K562 (cell line): ENCODE measurements at regions of chrX and their contacts with region 1.

Region 1: DNA sequence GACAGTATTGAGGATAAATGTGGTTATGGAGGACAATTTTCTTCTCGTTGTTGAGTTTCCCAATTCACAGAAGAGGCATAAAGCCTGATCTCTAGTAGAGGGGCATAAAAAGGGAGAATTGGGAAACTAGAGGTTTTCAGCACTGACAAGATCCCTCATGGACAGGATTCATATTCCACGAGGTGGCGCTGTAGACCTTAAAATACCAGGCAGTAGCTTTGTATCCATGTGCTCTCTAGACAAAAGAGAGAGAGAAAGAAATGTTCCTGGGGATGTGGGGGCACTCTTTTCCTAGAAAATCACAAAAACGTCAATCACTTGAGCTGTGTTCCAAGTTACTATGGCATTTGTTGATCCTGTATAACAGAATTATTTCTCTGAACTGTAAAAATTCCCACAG is 128.3 kb downstream of the MAGEE1 start:
- DNase-seq: peak; percentile 8 to 54 (median 14)
- ATAC-seq: no peak
- H3K4me3 ChIP-seq: no peak overlapping the region
- H3K27ac ChIP-seq: no peak overlapping the region
- H3K4me1 ChIP-seq: no peaks in the 10 kb centered on the region
- H3K27me3 ChIP-seq: no peaks in the 10 kb centered on the region
- CTCF ChIP-seq: peak; percentile 18 to 36 (median 33); a peak in 3 of 6 replicates
- EP300 ChIP-seq: no peak
- POLR2A ChIP-seq: no peak
- RAD21 ChIP-seq: peak in 1 of 2 experiments; percentile 50; a peak in 3 of 4 replicates

Region 2: GRCh38 chrX:76520273-76521054 is 35.4 kb before region 1 on chrX:
- CTCF ChIA-PET with region 1: no interaction called
- POLR2A ChIA-PET with region 1: no interaction called
- in situ Hi-C with region 1: no loop called
- intact Hi-C with region 1: no loop called
- DNase-seq: no peak
- ATAC-seq: no peak
- H3K4me3 ChIP-seq: no peak overlapping the region
- H3K27ac ChIP-seq: no peak overlapping the region
- H3K4me1 ChIP-seq: no peaks in the 10 kb centered on the region
- H3K27me3 ChIP-seq: no peaks in the 10 kb centered on the region
- CTCF ChIP-seq: no peak
- EP300 ChIP-seq: no peak
- POLR2A ChIP-seq: no peak
- RAD21 ChIP-seq: no peak

Region 3: GRCh38 chrX:78029663-78030062 is 1473.8 kb after region 1 on chrX:
- CTCF ChIA-PET with region 1: interaction called, 3 read pairs
- POLR2A ChIA-PET with region 1: no interaction called
- in situ Hi-C with region 1: loop called (anchors 10 kb)
- intact Hi-C with region 1: loop called (anchors 10 kb)
- DNase-seq: peak in 3 of 4 experiments; percentile 5 to 42 (median 6)
- ATAC-seq: peak; percentile 61
- H3K4me3 ChIP-seq: no peak overlapping the region
- H3K27ac ChIP-seq: no peak overlapping the region
- H3K4me1 ChIP-seq: no peaks in the 10 kb centered on the region
- H3K27me3 ChIP-seq: no peaks in the 10 kb centered on the region
- CTCF ChIP-seq: peak; percentile 45 to 66 (median 51); a peak in 5 of 6 replicates
- EP300 ChIP-seq: no peak
- POLR2A ChIP-seq: no peak
- RAD21 ChIP-seq: peak; percentile 52 to 78